ENCODE measurements at regions of chr16 and their contacts with region 1.

Region 1: DNA sequence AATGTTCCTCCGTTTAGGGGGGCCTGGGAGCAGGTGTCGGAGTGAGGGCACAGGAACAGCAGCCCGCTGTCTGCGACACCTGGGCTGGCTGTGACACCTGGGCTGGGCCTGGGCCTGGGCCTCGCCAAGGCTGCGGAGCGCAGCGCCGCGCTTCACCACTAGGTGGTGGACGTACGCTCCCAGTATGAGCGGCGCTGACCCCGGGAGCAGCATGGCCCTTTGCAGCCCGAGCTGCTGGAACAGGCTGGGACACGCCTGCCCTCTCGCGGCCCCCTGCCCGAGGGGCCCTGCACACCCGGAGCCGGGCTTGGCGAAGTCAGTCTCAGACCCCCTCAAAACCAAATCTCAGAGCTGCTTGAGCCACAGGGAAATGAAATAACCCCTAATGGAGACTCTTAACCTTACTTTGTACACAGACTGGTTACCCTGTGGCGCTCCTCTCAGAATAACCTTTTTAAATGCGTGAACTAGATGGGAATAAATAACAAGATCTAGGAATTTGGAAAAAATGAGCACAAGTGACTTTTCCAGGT is 38.6 kb upstream of the FA2H start:
- DNase-seq: no peak
- H3K4me3 ChIP-seq: no peak overlapping the region
- H3K27me3 ChIP-seq: peaks cover 3% of the 10 kb centered on the region
- CTCF ChIP-seq: peak; percentile 99

Region 2: GRCh38 chr16:74825941-74826542 is 12.9 kb after region 1 on chr16:
- CTCF ChIA-PET with region 1: interaction called, 15 read pairs
- POLR2A ChIA-PET with region 1: no interaction called
- DNase-seq: no peak
- H3K4me3 ChIP-seq: no peak overlapping the region
- H3K27me3 ChIP-seq: peaks cover 3% of the 10 kb centered on the region; the same call in 1 of the 2 replicates
- CTCF ChIP-seq: no peak

Region 3: DNA sequence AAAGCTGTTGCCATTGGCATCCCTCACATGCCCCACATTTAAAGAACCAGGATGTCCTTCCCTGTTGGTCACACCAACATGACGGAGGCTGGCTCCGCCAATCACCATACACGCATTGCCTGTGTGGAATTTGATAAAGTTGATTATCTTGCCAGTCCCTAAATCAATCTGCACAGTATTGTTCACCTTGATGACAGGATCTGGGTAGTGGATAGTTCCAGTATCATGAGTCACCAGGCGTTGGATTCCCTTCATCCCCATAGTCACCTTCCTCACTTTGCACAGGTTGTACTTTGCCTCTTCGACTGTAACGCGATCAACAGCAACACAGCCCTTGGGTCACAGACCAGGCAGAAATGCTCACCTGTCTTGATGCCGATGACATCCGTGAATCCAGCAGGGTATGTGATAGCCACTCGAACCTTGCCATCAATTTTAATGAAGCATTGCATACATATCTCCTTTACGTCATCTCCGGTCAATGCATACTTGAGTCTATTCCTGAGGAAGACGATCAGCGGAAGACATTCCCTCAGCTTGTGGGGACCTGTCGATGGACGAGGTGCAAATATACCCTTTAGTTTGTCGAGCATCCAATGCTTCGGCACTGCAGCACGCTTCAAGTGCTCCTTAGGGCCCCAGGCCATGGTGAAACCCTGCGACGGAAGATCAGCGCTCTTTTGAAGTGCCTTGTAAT is 379.6 kb after region 1 on chr16:
- CTCF ChIA-PET with region 1: no interaction called
- POLR2A ChIA-PET with region 1: no interaction called
- DNase-seq: no peak
- H3K4me3 ChIP-seq: no peak overlapping the region
- H3K27me3 ChIP-seq: peaks cover 5% of the 10 kb centered on the region
- CTCF ChIP-seq: no peak